ENCODE measurements at regions of chr6 and their contacts with region 1.

Region 1: DNA sequence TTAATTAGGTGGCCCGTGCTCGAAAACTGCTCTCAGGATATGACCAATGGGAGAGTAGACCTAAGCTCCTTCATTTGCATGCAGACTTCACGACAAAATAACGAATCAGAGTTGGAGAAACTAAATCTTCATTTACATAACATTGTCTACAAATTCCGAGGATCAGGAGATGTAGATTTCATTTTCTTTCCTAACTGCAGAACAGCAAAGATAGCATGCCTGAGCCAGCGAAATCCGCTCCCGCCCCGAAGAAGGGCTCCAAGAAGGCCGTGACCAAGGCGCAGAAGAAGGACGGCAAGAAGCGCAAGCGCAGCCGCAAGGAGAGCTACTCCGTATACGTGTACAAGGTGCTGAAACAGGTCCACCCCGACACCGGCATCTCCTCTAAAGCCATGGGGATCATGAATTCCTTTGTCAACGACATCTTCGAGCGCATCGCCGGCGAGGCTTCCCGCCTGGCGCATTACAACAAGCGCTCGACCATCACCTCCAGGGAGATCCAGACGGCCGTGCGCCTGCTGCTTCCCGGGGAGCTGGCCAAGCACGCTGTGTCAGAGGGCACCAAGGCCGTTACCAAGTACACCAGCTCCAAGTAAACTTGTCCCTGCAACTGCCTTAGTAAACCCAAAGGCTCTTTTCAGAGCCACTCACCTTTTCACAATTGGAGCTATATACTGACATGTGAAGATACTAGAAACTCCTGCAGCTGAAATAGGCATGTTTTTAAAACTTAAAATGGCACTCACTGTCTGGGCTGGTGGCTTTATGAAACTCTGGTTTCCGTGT is 96.5 kb downstream of the HFE start:
- DNase-seq: peak; percentile 71
- H3K4me3 ChIP-seq: peak overlapping the region; percentile 49 to 56
- H3K27ac ChIP-seq: peak overlapping the region; percentile 62 to 97
- H3K4me1 ChIP-seq: peaks cover 4 to 6% of the 10 kb centered on the region in 2 experiments; a peak in 2 of 4 replicates
- H3K27me3 ChIP-seq: no peaks in the 10 kb centered on the region
- CTCF ChIP-seq: no peak
- EP300 ChIP-seq: peak in 1 of 2 experiments; percentile 39; a peak in 1 of 4 replicates
- RAD21 ChIP-seq: no peak

Region 2: GRCh38 chr6:26172496-26172958 is 11.2 kb before region 1 on chr6:
- CTCF ChIA-PET with region 1: interaction called, 13 read pairs
- POLR2A ChIA-PET with region 1: interaction called, 21 read pairs
- DNase-seq: peak; percentile 39
- H3K4me3 ChIP-seq: peak overlapping the region; percentile 60 to 86
- H3K27ac ChIP-seq: peak overlapping the region; percentile 96 to 97
- H3K4me1 ChIP-seq: peaks cover 3 to 12% of the 10 kb centered on the region in 2 experiments; a peak in 3 of 4 replicates
- H3K27me3 ChIP-seq: no peaks in the 10 kb centered on the region
- CTCF ChIP-seq: no peak
- EP300 ChIP-seq: no peak
- RAD21 ChIP-seq: no peak

Region 3: GRCh38 chr6:26204332-26205165 is 20.8 kb after region 1 on chr6:
- CTCF ChIA-PET with region 1: interaction called, 9 read pairs
- POLR2A ChIA-PET with region 1: interaction called, 247 read pairs
- DNase-seq: peak; percentile 83
- H3K4me3 ChIP-seq: peak overlapping the region; percentile 69 to 95
- H3K27ac ChIP-seq: peak overlapping the region; percentile 97 to 99
- H3K4me1 ChIP-seq: peaks cover 4 to 13% of the 10 kb centered on the region in 2 experiments; a peak in 3 of 4 replicates
- H3K27me3 ChIP-seq: no peaks in the 10 kb centered on the region
- CTCF ChIP-seq: peak; percentile 49
- EP300 ChIP-seq: peak; percentile 88 to 97
- RAD21 ChIP-seq: no peak